Posterior vena cava (tissue), 2 donors: ENCODE measurements at regions of chr6 and their contacts with region 1.

Region 1: DNA sequence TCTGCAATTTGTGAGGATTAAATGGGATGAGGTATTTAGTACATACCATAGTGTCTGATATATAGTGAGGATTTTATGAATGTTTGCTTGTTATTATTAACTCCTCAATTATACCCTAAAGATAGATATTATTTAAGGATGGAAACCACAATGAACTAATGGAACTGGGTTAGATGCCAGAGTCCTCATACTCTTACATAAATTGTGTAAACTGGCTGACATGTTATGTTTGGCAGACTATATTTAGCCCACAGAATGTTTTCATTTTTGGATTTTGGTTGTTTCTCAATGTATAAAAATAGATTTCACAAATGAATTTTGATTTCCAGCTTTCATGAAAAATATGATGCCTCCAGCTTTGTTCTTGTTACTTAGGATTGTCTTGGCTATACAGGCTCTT is 37.6 kb downstream of the HTR1B start:
- DNase-seq: no peak

Region 2: DNA sequence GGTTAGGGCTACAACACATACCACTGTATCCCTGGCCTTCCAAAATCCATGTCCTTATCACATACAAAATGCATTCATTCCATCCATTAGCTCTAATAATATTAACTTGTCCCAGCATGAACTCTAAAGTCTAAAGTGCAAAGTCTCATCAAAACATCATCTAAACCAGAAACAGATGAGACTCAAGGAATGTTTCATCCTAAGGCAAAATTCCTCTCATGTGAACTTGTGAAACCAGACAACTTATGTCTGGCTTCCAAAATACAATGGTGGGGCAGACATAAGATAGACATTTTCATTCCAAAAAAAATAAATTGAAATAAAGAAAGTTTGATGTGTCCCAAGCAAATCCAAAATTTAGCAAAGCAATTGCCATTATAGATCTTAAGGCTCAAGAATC is 219.7 kb before region 1 on chr6:
- intact Hi-C with region 1: loop called in 1 of 2 experiments (anchors 10 kb)
- DNase-seq: no peak